ENCODE measurements at regions of chr17 and their contacts with region 1.

Region 1: GRCh38 chr17:28571255-28572122 is at the start of gene PIGS:
- DNase-seq: peak; percentile 94
- H3K4me3 Mint-ChIP-seq: peak within 1 kb of the TSS; percentile 95
- H3K27ac Mint-ChIP-seq: peak within 1 kb of the TSS; percentile 95
- H3K4me1 Mint-ChIP-seq: peaks cover 61% of the 10 kb centered on the region
- H3K27me3 Mint-ChIP-seq: no peaks in the 10 kb centered on the region
- total RNA-seq, gene PIGS: 61.7 to 62.6 TPM

Region 2: DNA sequence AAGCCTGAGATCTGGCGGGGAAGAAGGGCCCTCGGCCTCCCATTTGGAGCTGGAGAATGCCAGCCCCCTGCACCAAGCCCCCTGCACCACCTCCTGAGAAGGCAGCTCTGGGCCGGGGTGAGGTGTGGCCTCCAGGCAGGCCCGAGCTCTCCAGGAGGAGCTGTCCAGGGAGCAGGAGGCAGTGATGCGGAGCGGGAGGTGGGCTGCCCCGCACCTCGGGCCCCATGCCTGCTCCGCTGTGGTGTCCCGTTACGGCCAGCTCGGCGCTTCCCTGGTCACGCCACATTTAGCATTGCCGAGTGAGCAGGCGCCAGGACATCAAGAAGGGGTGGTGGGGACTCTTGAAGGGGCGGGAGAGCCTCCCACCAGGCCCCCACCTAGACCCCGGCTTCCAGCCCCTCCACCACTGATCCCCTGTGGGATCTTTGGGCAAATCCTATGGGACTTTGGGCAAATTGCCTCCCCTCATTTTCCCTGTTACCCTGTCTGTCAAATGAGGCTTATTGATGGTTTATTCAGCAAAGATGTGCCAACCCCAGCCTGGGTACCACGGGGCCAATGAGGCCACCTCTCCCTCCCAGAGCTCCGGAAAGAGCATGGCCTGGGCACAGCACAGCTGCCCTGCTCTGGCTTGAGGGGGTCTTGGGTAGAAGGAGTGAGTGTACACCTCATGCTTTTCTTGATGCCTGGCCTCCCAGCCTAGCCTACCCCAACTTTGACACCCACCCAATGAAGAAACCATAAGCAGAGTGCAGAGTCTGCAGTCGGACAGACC is 50.0 kb before region 1 on chr17:
- CTCF ChIA-PET with region 1: no interaction called
- POLR2A ChIA-PET with region 1: no interaction called
- DNase-seq: no peak
- H3K4me3 Mint-ChIP-seq: no peak overlapping the region
- H3K27ac Mint-ChIP-seq: no peak overlapping the region
- H3K4me1 Mint-ChIP-seq: peaks cover 4% of the 10 kb centered on the region
- H3K27me3 Mint-ChIP-seq: peaks cover 9% of the 10 kb centered on the region

Region 3: GRCh38 chr17:28547623-28548416 is 23.7 kb before region 1 on chr17:
- CTCF ChIA-PET with region 1: interaction called, 27 read pairs
- POLR2A ChIA-PET with region 1: no interaction called
- DNase-seq: peak; percentile 62
- H3K4me3 Mint-ChIP-seq: peak overlapping the region; percentile 67
- H3K27ac Mint-ChIP-seq: peak overlapping the region; percentile 91
- H3K4me1 Mint-ChIP-seq: peaks cover 46% of the 10 kb centered on the region
- H3K27me3 Mint-ChIP-seq: no peaks in the 10 kb centered on the region

Measured in activated CD4-positive, alpha-beta T cell treated with anti-CD3 and anti-CD28 coated beads, Interleukin-2, amount 10 ng/mL, durations not matched to agents 7 days and 5 days (primary cell).